PC-9 (cell line): ENCODE measurements at regions of chrX and their contacts with region 1.

Region 1: GRCh38 chrX:53683556-53684414 is 2.7 kb downstream of the HUWE1 start:
- DNase-seq: peak; percentile 90 to 97
- H3K4me3 ChIP-seq: peak overlapping the region; percentile 58
- H3K27ac ChIP-seq: peak overlapping the region; percentile 82
- H3K4me1 ChIP-seq: no peaks in the 10 kb centered on the region
- H3K27me3 ChIP-seq: no peaks in the 10 kb centered on the region
- CTCF ChIP-seq: no peak

Region 2: DNA sequence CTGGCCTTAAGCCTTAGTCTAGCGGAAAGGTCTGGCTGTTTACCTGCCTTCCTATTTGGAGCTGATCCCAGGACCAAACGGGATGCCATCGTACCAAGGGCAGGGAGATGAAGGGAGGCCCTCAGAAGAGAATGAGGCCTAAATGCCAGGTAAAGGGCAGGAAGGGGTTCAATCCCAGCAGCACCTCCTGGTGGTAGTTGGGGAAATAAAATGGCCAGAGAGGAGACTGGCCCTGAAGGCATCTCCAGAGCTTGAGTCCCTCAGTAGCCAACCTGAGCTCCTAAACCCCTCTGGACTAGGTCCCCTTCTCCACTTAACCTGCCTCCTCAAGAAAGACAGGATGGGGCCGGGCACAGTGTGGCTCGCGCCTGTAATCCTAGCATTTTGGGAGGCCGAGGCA is 512.4 kb before region 1 on chrX:
- CTCF ChIA-PET with region 1: no interaction called
- POLR2A ChIA-PET with region 1: interaction called, 13 read pairs
- intact Hi-C with region 1: no loop called
- DNase-seq: no peak
- H3K4me3 ChIP-seq: no peak overlapping the region
- H3K27ac ChIP-seq: no peak overlapping the region
- H3K4me1 ChIP-seq: no peaks in the 10 kb centered on the region
- H3K27me3 ChIP-seq: no peaks in the 10 kb centered on the region
- CTCF ChIP-seq: no peak

Region 3: GRCh38 chrX:53694642-53695041 is 10.9 kb after region 1 on chrX:
- CTCF ChIA-PET with region 1: no interaction called
- POLR2A ChIA-PET with region 1: interaction called, 10 read pairs
- intact Hi-C with region 1: no loop called
- DNase-seq: no peak
- H3K4me3 ChIP-seq: no peak overlapping the region
- H3K27ac ChIP-seq: no peak overlapping the region
- H3K4me1 ChIP-seq: no peaks in the 10 kb centered on the region
- H3K27me3 ChIP-seq: no peaks in the 10 kb centered on the region
- CTCF ChIP-seq: no peak

Region 4: DNA sequence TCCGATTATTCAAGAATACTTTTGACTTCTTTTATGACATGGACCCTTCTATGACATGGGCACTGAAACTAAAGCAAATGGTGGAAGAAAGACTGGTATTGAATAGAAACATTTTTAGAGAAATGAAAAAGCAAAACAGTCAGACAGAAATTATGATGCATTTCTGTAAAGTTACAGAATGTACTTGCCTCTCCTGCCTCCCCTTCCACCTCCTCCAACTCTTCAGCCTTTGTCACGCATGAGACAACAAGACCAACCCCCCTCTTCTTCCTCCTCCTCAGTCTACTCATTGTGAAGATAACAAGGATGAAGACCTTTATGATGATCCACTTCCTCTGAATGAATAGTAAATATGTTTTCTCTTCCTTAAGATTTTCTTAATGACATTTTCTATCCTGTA is 49.0 kb after region 1 on chrX:
- CTCF ChIA-PET with region 1: no interaction called
- POLR2A ChIA-PET with region 1: interaction called, 18 read pairs
- intact Hi-C with region 1: no loop called
- DNase-seq: no peak
- H3K4me3 ChIP-seq: no peak overlapping the region
- H3K27ac ChIP-seq: no peak overlapping the region
- H3K4me1 ChIP-seq: no peaks in the 10 kb centered on the region
- H3K27me3 ChIP-seq: no peaks in the 10 kb centered on the region
- CTCF ChIP-seq: no peak

Region 5: DNA sequence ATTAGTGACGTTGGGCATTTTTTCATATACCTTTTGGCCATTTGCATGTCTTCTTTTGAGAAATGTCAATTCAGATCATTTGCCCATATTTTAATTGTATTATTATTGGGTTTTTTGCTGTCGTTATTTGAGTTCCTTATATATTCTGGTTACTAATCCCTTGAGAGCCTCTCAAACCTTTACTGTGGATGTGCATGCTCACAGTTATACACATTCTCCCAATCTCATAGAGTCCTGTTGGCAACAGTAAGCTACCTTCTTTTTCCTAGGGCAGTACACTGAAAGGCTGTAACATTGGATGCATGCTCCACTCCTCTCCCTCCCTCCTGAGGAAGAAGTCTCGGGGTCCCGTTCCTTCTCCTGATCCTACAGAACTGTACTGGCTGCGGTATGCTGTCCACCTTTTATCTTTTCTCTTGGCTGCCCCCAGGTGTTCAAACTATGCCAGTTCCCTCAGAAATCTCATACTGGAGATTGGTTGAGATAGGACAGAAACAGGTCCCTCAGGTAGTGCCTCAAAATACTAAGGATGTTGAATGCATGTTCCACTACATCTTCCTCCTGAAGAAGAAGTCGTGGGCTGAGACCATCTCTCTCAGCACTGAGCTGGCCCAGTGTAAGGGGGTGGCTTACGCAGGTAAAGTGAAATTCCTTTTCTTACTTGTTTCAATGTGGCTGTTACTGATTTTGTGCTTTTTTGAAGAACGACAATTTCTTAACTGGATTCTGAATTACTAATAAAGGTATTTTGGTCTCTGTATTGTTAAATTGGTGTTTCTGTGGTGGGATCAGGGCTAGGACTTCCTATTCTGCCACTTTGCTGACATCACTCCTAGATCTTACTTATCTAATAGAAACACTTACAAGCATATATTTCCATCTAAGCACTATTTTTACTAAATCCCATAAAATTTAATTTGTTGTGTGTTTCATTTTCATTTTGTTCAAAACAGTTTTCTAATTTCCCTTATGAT is 148.2 kb after region 1 on chrX:
- CTCF ChIA-PET with region 1: interaction called, 3 read pairs
- POLR2A ChIA-PET with region 1: no interaction called
- intact Hi-C with region 1: loop called (anchors 1 kb)
- DNase-seq: peak in 1 of 2 experiments; percentile 62
- H3K4me3 ChIP-seq: no peak overlapping the region
- H3K27ac ChIP-seq: no peak overlapping the region
- H3K4me1 ChIP-seq: no peaks in the 10 kb centered on the region
- H3K27me3 ChIP-seq: no peaks in the 10 kb centered on the region
- CTCF ChIP-seq: peak; percentile 65

Region 6: DNA sequence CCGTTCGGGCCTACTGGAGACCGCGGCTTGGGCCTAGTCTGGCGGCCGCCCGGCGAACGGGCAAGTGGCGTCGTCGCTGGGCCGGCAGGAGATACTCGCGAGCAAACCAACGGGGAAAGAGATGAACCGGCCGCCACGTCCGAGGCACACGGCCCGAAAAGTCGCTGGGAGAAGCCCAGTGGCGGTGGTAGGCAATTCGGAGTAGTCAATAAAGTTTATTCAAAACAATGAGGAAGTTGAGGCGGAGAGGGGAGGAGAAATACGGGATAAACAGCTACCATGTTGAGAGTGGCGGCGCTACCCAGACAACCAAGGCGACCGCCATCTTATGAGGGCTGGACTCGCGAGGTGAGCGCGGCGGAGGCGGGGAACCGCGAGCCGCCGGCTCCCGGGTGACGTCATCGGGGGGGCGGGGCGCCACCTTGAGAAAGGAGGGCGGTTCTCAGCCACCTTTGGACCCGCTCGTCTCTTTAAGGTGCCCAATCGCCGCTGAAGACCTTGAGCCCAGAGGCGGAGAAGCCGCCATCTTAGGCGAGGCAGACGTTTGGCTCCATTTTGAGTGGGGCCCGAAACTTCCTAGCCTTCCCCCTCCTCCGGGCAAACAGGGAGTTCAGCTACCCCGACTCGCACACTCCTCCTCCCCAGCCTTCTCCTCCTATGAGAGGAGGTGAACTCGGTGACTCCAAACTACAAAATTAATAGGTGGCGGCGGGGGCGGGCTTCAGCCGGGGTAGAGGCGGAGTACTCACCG is 360.5 kb after region 1 on chrX and contains the start of gene PHF8:
- CTCF ChIA-PET with region 1: no interaction called
- POLR2A ChIA-PET with region 1: no interaction called
- intact Hi-C with region 1: loop called (anchors 1 kb)
- DNase-seq: peak; percentile 93 to 98
- H3K4me3 ChIP-seq: peak within 1 kb of the TSS; percentile 96
- H3K27ac ChIP-seq: peak within 1 kb of the TSS; percentile 98
- H3K4me1 ChIP-seq: peaks cover 17% of the 10 kb centered on the region
- H3K27me3 ChIP-seq: no peaks in the 10 kb centered on the region
- CTCF ChIP-seq: no peak
- total RNA-seq, gene PHF8: 40.0 and 56.4 TPM in 2 replicates

Region 7: GRCh38 chrX:54182864-54183608 is 499.3 kb after region 1 on chrX and contains the start of gene FAM120C:
- CTCF ChIA-PET with region 1: no interaction called
- POLR2A ChIA-PET with region 1: interaction called, 4 read pairs
- intact Hi-C with region 1: loop called (anchors 2 kb)
- DNase-seq: peak; percentile 53 to 72
- H3K4me3 ChIP-seq: peak within 1 kb of the TSS; percentile 78
- H3K27ac ChIP-seq: peak within 1 kb of the TSS; percentile 73
- H3K4me1 ChIP-seq: peaks cover 40% of the 10 kb centered on the region
- H3K27me3 ChIP-seq: no peaks in the 10 kb centered on the region
- CTCF ChIP-seq: no peak
- total RNA-seq, gene FAM120C: 21.6 and 22.0 TPM in 2 replicates